Kidney (tissue), 22 donors: ENCODE measurements at regions of chr9 and their contacts with region 1.

Region 1: DNA sequence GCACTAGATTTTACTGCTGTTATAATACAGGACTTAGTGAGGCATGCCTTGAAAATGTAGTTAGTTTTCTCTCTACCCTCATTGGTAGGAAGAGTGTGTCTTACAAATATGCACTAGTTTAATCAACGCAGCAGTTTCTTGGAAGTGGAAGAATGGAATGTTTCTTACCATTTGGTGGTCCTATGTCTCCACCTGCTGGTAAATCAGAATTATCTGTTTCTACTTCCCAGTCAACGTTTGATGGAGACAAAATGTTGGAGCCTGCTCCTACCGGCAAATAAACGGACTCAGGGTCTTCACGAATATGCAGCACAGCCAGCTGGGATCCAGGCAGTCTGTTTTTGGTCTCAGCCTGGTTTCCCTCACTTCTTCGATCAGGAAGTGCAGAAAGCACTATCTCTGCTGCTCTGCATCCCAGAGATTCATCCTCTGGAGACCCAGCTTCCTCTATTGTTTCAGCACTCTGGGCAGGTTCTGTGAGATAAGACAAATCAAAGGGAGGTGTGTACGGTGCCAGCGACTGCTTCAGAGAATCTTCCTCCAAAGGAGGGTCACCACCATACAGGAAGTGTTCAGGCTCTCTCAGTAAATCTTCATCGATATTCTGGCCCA is 59.5 kb upstream of the PCA3 start:
- DNase-seq: peak in 3 of 5 donors; percentile 37 to 93 (median 85)
- H3K4me3 ChIP-seq: no peak overlapping the region
- H3K27ac ChIP-seq: no peak overlapping the region
- H3K4me1 ChIP-seq: no peaks in the 10 kb centered on the region
- H3K27me3 ChIP-seq: no peaks in the 10 kb centered on the region
- CTCF ChIP-seq: peak; percentile 49

Region 2: GRCh38 chr9:76441551-76442322 is 263.0 kb before region 1 on chr9:
- intact Hi-C with region 1: loop called (anchors 10 kb)
- DNase-seq: peak in 3 of 5 donors; percentile 10 to 36 (median 33)
- H3K4me3 ChIP-seq: no peak overlapping the region
- H3K27ac ChIP-seq: no peak overlapping the region
- H3K4me1 ChIP-seq: no peaks in the 10 kb centered on the region
- H3K27me3 ChIP-seq: no peaks in the 10 kb centered on the region
- CTCF ChIP-seq: no peak

Region 3: DNA sequence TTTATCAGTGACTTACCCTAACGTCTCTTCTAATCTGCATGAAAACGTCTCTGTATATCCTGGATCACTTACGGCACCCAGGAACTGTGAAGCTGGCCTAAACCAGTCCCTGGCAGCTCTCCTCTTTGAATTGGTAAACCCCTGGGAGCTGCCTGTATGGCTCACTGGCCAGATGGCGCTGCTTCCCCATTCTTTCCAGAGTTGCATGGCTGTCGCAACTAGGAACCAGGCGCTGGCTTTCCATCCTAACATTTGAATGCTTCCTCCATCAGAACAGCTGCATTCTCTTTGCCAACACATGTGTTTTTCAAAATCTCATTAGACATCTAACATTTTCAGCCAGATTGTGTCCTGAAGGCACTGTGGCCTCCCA is 51.6 kb after region 1 on chr9:
- intact Hi-C with region 1: no loop called
- DNase-seq: peak in 2 of 5 donors; percentile 22 to 77
- H3K4me3 ChIP-seq: no peak overlapping the region
- H3K27ac ChIP-seq: no peak overlapping the region
- H3K4me1 ChIP-seq: peaks cover 0 to 4% (median 3%) of the 10 kb centered on the region in 3 donors
- H3K27me3 ChIP-seq: no peaks in the 10 kb centered on the region
- CTCF ChIP-seq: no peak